Activated T-helper 2 cell treated with anti-CD3 and anti-CD28 coated beads, Interferon-gamma antibody, Interleukin-2, Interleukin-4, amounts not matched to agents 10 μg/mL and 5 μg/mL and 100 μg/mL, durations not matched to agents 14 hours and 24 hours and 36 hours (primary cell): ENCODE measurements at regions of chr9 and their contacts with region 1.

Region 1: GRCh38 chr9:4366591-4367330 is 66.9 kb upstream of the GLIS3 start:
- DNase-seq: no peak
- H3K4me3 Mint-ChIP-seq: no peak overlapping the region
- H3K27ac Mint-ChIP-seq: no peak overlapping the region
- H3K4me1 Mint-ChIP-seq: peaks cover 9% of the 10 kb centered on the region
- H3K27me3 Mint-ChIP-seq: peaks cover 6% of the 10 kb centered on the region

Region 2: DNA sequence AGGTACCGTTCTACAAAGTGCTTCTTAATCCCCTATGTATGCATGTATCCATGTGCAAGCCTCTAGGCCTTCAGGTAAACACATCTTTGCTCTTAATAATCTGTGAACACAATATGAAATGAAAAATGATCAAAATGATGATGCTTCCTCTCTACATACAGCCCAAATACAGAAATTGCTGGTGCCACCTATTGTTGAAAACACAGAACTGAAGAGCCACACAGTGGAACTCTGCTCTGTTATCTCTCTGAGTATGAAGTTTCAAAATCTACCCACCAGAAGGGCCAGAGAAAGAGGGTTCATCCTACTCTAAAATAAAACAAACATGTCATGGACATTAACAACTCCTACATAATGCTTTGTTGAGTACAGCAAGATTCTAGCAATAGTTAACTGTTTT is 138.2 kb before region 1 on chr9:
- intact Hi-C with region 1: loop called (anchors 10 kb)
- DNase-seq: no peak
- H3K4me3 Mint-ChIP-seq: no peak overlapping the region
- H3K27ac Mint-ChIP-seq: no peak overlapping the region
- H3K4me1 Mint-ChIP-seq: peaks cover 19% of the 10 kb centered on the region
- H3K27me3 Mint-ChIP-seq: no peaks in the 10 kb centered on the region

Region 3: DNA sequence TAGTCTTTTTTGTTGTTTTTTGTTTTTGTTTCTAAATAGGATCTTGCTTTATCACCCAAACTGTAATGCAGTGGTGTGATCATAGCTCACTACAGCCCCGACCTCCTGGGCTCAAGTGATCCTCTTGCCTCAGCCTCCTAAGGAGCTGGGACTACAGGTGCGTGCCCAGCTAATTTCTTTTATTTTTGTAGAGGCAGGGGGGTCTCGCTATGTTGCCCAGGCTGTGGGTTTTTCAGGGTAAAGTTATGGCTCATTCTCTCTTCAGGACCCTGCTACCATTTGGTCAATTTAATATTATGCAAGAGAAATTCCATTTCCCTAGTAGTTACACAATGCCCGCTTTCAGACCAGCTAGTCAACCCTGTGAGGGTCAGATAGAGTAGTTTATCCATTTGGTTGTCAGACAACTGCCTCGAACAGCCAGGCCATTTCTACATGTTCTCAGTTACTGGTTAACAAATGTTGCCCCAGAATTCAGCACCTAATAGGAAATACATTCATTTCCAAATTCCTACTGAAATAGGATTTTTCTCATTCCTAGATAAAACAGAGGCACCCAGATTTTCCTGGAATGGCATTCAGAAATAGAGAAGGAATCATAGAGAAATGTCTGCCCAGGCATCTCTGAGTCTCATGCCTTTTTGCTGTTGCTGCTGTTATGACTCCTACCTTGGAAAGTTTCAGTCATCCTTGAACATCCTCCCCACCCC is 60.5 kb before region 1 on chr9:
- intact Hi-C with region 1: loop called (anchors 1 kb)
- DNase-seq: no peak
- H3K4me3 Mint-ChIP-seq: no peak overlapping the region
- H3K27ac Mint-ChIP-seq: peak overlapping the region; percentile 71
- H3K4me1 Mint-ChIP-seq: peaks cover 53% of the 10 kb centered on the region
- H3K27me3 Mint-ChIP-seq: peaks cover 13% of the 10 kb centered on the region

Region 4: GRCh38 chr9:4315582-4316215 is 51.1 kb before region 1 on chr9:
- intact Hi-C with region 1: loop called (anchors 1 kb)
- DNase-seq: peak; percentile 47
- H3K4me3 Mint-ChIP-seq: no peak overlapping the region
- H3K27ac Mint-ChIP-seq: no peak overlapping the region
- H3K4me1 Mint-ChIP-seq: peaks cover 2% of the 10 kb centered on the region
- H3K27me3 Mint-ChIP-seq: peaks cover 3% of the 10 kb centered on the region

Region 5: GRCh38 chr9:4339357-4339756 is 27.4 kb before region 1 on chr9:
- intact Hi-C with region 1: loop called (anchors 2 kb)
- DNase-seq: peak; percentile 69
- H3K4me3 Mint-ChIP-seq: peak overlapping the region; percentile 27
- H3K27ac Mint-ChIP-seq: peak overlapping the region; percentile 51
- H3K4me1 Mint-ChIP-seq: peaks cover 10% of the 10 kb centered on the region
- H3K27me3 Mint-ChIP-seq: peaks cover 2% of the 10 kb centered on the region

Region 6: DNA sequence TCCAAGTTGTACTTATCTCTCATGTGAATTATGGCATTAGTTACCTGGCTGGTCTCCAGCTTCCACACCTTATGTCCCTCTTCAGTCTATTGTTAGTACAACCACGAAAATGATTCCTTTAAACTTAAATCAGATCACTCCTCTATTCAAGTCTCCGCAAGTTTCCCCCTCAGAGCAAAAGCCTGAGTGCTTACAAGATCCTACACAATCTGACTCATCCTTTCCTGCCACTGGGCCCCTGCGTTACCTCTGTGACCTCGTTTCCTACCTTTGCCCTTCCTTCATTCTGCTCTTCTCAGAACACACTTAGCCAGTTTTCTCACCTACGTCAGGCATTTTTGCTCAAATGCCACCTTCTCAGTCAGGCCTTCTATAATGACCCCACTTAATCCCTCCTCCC is 21.8 kb before region 1 on chr9:
- intact Hi-C with region 1: loop called (anchors 1 kb)
- DNase-seq: no peak
- H3K4me3 Mint-ChIP-seq: no peak overlapping the region
- H3K27ac Mint-ChIP-seq: no peak overlapping the region
- H3K4me1 Mint-ChIP-seq: peaks cover 14% of the 10 kb centered on the region
- H3K27me3 Mint-ChIP-seq: no peaks in the 10 kb centered on the region

Region 7: GRCh38 chr9:4713849-4714248 is 347.1 kb after region 1 on chr9:
- intact Hi-C with region 1: no loop called
- DNase-seq: no peak
- H3K4me3 Mint-ChIP-seq: no peak overlapping the region
- H3K27ac Mint-ChIP-seq: peak overlapping the region; percentile 69
- H3K4me1 Mint-ChIP-seq: peaks cover 6% of the 10 kb centered on the region
- H3K27me3 Mint-ChIP-seq: no peaks in the 10 kb centered on the region